ENCODE measurements at regions of chr6 and their contacts with region 1.

Region 1: DNA sequence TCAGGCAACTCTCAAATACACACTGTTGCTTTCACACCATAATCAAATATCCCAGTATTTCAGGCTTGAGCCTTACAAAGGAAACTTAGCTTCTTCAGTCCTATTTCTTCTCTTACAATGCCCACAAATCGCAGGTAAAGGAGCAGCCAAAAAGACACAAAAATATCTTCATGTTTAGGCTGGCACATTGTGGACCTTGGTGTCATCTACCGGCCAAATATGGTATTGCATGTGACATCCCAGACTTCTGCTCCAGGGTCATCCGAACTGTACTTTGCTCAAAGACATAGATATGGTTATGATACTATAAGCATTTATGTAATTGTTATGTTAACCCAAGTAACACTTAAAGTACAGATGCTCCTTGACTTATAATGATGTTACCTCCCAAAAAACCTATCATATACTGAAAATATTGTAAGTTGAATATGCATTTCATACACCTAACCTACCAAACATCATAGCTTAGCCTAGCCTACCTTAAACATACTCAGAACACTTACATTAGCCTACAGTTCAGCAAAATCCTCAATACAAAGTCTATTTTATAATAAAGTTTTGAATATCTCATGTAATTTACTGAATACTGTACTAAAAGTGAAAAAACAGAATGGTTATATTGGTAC is 4.6 kb downstream of the OR2H2 start:
- DNase-seq: peak; percentile 33
- H3K4me3 ChIP-seq: no peak overlapping the region
- H3K27ac ChIP-seq: no peak overlapping the region
- H3K4me1 ChIP-seq: peaks cover 0 to 4% (median 0%) of the 10 kb centered on the region in 4 donors
- H3K27me3 ChIP-seq: peaks cover 30% of the 10 kb centered on the region
- CTCF ChIP-seq: peak; percentile 84 to 94 (median 94)
- EP300 ChIP-seq: no peak
- POLR2A ChIP-seq: no peak

Region 2: DNA sequence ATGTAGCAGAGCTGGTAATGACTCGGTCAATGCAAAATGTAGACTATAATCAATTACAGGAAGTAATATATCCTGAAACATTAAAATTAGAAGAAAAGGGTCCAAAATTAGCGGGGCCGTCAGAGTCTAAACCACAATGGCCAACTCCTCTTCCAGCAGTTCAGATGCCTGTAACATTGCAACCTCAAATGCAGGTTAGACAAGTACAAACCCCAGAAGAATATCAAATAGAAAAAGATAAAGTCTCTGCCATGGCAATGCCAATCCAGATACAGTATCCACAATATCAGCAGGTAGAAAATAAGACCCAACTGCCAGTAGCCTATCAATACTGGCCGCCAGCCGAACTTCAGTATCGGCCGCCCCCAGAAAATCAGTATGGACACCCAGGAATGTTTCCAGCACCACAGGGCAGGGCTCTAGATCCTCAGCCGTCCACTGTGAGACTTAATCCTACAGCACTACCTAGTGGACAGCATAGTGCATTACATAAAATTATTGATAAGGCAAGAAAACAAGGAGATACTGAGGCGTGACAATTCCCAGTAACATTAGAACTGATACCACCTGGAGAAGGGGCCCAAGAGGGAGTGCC is 905.5 kb before region 1 on chr6:
- in situ Hi-C with region 1: loop called in 3 of 4 experiments (anchors 25 kb)
- intact Hi-C with region 1: no loop called
- DNase-seq: peak; percentile 8
- H3K4me3 ChIP-seq: no peak overlapping the region
- H3K27ac ChIP-seq: no peak overlapping the region
- H3K4me1 ChIP-seq: no peaks in the 10 kb centered on the region
- H3K27me3 ChIP-seq: peaks cover 97% of the 10 kb centered on the region
- CTCF ChIP-seq: peak; percentile 27 to 50 (median 36)
- EP300 ChIP-seq: no peak
- POLR2A ChIP-seq: no peak

Region 3: DNA sequence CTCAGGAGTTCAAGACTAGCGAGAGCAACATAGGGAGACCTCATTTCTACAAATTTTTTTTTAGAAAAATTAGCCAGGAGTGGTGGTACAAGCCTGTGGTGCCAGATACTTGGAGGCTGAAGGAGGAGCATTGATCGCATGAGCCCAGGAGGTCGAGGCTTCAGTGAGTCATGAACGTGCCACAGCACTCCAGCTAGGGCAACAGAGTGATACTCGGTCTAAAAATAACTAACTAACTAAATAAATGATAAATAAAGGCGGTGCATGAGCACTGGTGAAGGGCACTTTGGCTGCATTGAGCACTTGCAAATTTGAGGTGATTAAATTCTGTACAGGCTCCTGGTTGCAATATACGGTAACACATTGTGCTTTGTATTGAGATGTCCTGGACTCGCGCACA is 366.2 kb after region 1 on chr6:
- in situ Hi-C with region 1: no loop called
- intact Hi-C with region 1: no loop called
- DNase-seq: no peak
- H3K4me3 ChIP-seq: no peak overlapping the region
- H3K27ac ChIP-seq: no peak overlapping the region
- H3K4me1 ChIP-seq: no peaks in the 10 kb centered on the region
- H3K27me3 ChIP-seq: no peaks in the 10 kb centered on the region
- CTCF ChIP-seq: no peak
- EP300 ChIP-seq: no peak
- POLR2A ChIP-seq: no peak

Measured in transverse colon (tissue), 4 donors.